ENCODE measurements at regions of chr5 and their contacts with region 1.

Region 1: GRCh38 chr5:14142827-14143548 is at the start of gene TRIO:
- DNase-seq: peak; percentile 96
- H3K4me3 ChIP-seq: peak within 1 kb of the TSS; percentile 86
- H3K27ac ChIP-seq: peak within 1 kb of the TSS; percentile 91
- H3K4me1 ChIP-seq: peaks cover 7% of the 10 kb centered on the region
- H3K27me3 ChIP-seq: no peaks in the 10 kb centered on the region
- CTCF ChIP-seq: peak; percentile 34
- total RNA-seq, gene TRIO: 134 to 138 TPM

Region 2: DNA sequence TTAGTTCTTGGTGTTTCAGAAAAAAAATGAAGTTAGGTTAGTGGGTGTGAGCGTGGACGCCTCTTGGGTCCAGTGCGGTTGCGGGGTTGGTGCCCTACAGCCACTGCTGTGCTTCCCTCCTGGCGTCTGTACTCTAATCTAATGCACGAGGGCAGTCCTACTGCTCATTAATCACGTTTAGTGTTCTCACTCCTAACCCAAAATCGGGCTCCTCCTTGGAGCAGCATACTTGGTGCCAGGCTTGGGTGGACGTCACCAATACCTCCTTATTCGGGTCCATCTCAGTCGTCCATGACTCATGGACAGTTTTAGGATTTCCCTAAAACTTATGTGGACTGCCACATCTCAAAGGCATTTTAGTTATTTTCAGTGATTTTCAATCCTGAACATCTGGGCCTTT is 41.7 kb after region 1 on chr5:
- intact Hi-C with region 1: loop called (anchors 5 kb)
- DNase-seq: no peak
- H3K4me3 ChIP-seq: no peak overlapping the region
- H3K27ac ChIP-seq: peak overlapping the region; percentile 28
- H3K4me1 ChIP-seq: no peaks in the 10 kb centered on the region
- H3K27me3 ChIP-seq: no peaks in the 10 kb centered on the region
- CTCF ChIP-seq: no peak

Region 3: DNA sequence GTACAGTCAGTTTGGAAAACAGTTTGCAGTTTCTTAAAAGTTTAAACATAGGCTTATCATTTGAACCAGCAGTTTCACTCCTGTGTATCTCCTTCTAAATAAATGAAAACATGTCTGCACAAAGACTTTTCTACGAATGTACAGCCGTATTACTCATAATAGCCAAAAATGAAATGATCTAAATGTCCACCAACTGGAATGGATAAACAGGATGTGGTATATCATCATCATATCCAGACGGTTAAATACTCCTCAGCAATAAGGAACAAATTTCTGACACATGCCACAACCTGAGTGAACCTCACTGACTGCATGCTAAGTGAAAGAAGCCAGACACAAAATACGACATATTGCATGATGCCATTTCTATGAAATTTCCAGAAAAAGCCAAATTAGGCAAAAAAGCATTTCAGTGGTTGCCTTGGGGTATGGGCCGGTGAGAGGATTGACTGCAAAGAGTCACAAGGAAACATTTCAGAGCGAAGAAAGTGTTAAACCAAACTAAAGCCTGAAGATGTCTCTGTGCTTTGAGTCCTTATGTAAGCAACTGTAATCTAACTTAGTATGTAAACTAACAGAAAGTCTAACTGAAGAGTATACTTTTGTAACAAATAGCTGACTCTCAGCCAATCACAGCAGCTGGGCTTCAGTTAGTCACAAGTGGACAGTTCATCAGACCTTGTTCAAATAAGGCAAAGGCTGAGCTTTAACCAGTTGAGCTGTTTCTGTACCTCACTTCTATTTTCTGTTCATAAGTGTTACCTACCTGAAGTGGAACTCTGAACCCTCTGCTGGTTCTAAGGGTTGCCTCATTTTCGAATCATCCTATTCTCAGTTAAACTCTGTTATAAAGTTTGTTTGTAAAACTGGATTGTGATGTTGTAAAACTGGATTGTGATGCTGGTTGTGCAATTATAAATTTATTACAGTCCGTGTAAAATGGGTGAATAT is 65.4 kb after region 1 on chr5:
- intact Hi-C with region 1: loop called (anchors 10 kb)
- DNase-seq: peak; percentile 73
- H3K4me3 ChIP-seq: no peak overlapping the region
- H3K27ac ChIP-seq: peak overlapping the region; percentile 91
- H3K4me1 ChIP-seq: peaks cover 15% of the 10 kb centered on the region
- H3K27me3 ChIP-seq: no peaks in the 10 kb centered on the region
- CTCF ChIP-seq: no peak

Region 4: GRCh38 chr5:14264604-14265316 is 121.8 kb after region 1 on chr5:
- intact Hi-C with region 1: loop called (anchors 10 kb)
- DNase-seq: peak; percentile 95
- H3K4me3 ChIP-seq: no peak overlapping the region
- H3K27ac ChIP-seq: no peak overlapping the region
- H3K4me1 ChIP-seq: peaks cover 11% of the 10 kb centered on the region
- H3K27me3 ChIP-seq: no peaks in the 10 kb centered on the region
- CTCF ChIP-seq: no peak

Region 5: DNA sequence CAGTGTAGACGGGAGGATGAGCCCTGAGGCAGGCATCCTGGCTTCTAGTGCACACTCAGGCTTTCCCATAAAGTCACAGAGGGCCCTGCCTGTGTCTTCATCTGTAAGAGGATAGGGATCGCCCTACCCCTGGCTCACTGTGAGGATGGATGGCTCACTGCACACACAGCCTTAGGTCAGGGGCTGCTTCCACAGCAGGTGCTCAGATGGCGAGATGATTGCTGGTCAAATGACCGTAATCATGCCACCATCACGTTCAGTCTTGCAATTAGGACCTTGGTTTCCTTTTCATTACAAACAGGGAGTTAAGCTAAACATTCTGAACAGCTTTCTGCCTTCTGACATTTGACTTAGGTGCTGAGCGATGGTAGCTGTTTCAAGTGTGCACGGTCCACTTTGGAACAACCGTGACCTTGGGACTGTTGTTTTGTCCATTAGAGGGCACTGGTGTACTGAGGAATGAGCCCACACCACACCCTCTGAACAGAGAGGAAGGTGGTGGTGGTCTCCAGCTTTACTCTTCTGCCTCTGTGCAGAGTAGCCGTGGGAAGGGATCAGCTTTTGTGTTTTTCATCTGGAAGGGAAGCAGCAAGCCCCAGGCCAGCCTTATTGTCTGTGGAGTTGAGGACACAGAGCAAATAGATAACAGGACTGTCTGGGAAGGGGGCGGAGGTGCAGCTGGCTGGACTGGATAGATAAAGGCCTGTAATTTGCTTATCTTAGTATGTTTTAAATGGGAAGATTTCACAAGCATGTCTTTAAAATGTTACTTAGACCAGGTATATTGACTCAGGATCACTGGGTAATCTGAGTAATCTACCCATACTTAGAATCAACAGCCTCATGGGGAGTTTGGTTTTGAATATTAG is 183.3 kb after region 1 on chr5:
- intact Hi-C with region 1: no loop called
- DNase-seq: no peak
- H3K4me3 ChIP-seq: no peak overlapping the region
- H3K27ac ChIP-seq: no peak overlapping the region
- H3K4me1 ChIP-seq: no peaks in the 10 kb centered on the region
- H3K27me3 ChIP-seq: no peaks in the 10 kb centered on the region
- CTCF ChIP-seq: peak; percentile 22

Measured in colonic mucosa (tissue), 4 donors.